Calu3 (cell line): ENCODE measurements at regions of chr2 and their contacts with region 1.

Region 1: GRCh38 chr2:151459358-151459757 is 49.7 kb downstream of the RIF1 start:
- DNase-seq: no peak
- H3K4me3 Mint-ChIP-seq: no peak overlapping the region
- H3K27ac Mint-ChIP-seq: no peak overlapping the region
- H3K4me1 Mint-ChIP-seq: no peaks in the 10 kb centered on the region
- H3K27me3 Mint-ChIP-seq: no peaks in the 10 kb centered on the region
- CTCF ChIP-seq: no peak

Region 2: DNA sequence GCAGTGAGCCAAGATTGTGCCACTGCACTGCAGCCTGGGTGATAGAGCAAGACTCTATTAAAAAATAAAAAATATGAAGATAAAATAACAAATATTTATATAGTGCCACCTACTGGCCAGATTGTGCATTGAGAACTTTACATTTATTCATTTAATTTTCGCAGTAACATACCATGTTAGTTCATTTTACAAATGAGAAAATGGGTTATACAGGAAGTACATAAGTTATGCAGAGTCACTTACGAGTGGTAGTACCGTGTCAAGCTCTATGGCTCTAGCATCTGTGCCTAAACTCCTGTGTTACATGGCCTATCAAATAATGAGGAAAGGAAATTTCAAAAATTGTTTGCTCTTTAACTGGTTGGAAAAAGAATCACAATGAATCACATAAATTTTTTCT is 21.7 kb before region 1 on chr2:
- CTCF ChIA-PET with region 1: no interaction called
- intact Hi-C with region 1: loop called (anchors 1 kb)
- DNase-seq: peak; percentile 18
- H3K4me3 Mint-ChIP-seq: no peak overlapping the region
- H3K27ac Mint-ChIP-seq: no peak overlapping the region
- H3K4me1 Mint-ChIP-seq: no peaks in the 10 kb centered on the region
- H3K27me3 Mint-ChIP-seq: no peaks in the 10 kb centered on the region
- CTCF ChIP-seq: peak; percentile 45